Activated CD4-positive, alpha-beta T cell treated with anti-CD3 and anti-CD28 coated beads, Interleukin-2, amount 10 ng/mL, durations not matched to agents 7 days and 5 days (primary cell): ENCODE measurements at regions of chr2 and their contacts with region 1.

Region 1: DNA sequence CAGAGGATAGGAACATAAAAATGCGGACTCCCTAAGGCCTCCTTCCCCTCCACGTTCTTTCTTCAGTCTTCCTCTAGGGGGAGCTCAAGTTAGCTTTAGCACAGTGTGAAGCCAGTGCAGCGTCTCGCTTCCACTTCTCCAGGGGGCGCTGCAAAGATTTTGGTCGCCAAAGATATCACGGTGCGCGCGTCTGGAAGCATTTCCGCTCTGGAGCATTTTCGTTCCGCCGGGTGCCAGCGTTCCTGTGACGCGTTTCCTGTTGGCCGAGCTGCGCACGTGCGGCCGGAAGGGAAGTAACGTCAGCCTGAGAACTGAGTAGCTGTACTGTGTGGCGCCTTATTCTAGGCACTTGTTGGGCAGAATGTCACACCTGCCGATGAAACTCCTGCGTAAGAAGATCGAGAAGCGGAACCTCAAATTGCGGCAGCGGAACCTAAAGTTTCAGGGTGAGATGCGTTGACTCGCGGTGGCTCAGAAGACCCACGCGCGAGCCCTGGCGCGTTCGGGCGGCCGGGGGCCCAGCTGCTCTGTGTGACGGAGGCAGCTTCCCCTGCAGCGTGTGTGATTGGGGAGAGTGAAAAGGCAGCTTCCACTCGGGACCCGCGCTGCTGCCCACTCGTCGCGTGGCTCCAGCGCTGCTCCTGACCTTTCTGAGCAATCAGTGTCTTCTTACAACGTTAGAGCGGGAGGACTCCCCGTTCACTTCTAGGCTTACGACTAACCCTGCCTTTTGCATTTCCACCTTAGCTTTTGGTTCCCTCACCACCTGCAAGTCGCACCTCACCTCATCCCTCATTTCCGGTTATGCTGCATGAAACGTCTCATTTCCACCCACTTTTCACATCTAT is at the start of gene DDX18:
- DNase-seq: peak; percentile 98
- H3K4me3 Mint-ChIP-seq: peak within 1 kb of the TSS; percentile 84
- H3K27ac Mint-ChIP-seq: peak within 1 kb of the TSS; percentile 94
- H3K4me1 Mint-ChIP-seq: peaks cover 41% of the 10 kb centered on the region
- H3K27me3 Mint-ChIP-seq: no peaks in the 10 kb centered on the region
- total RNA-seq, gene DDX18: 80.7 to 93.9 TPM

Region 2: DNA sequence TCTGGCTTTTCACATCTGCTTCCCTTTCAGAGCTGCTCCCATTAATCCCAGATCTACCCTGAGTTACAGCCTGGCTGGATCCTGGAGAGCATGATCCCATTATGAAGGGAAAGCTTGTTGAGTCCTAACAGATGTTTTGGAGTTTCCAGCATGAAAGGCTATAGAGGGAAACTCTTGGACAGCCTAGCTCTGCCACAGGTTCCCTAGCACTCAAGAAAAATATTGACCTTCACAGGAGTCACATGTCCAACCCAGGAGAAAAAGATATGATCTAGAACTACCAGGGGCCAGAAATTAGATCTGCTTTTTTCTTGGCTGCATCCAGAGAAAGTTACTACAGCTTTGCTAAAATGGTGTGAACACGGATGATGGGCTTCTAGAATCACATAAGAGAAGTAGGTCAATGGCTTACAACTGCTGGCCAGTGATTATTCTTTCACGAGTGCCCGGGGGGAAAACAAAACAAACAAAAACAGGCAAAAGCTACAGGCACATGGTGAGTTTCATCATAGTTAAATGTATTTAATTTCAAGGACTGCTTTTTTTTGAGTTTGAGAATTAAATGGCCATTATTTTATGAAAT is 183.3 kb after region 1 on chr2:
- CTCF ChIA-PET with region 1: interaction called, 62 read pairs
- POLR2A ChIA-PET with region 1: no interaction called
- DNase-seq: no peak
- H3K4me3 Mint-ChIP-seq: no peak overlapping the region
- H3K27ac Mint-ChIP-seq: no peak overlapping the region
- H3K4me1 Mint-ChIP-seq: no peaks in the 10 kb centered on the region
- H3K27me3 Mint-ChIP-seq: no peaks in the 10 kb centered on the region

Region 3: DNA sequence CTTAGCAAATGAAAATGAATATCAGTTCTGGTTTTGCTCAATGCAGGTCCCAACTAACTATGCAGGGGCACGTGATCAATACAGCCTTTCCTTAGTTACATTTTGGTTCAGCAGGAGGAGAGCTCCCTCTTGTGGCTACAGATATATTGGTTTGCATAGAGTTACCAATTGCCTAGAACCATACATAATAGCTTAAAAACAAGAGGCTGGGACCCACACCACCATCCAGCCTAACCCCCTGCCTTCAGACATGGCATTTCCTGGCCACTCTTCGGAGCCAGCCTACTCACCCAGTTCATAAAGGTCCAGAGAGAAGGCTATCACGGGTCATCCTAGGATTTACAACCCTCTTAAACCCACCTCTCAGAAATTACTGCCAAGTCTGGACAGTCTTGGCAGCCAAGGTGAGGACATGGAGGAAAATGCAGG is 188.8 kb after region 1 on chr2:
- CTCF ChIA-PET with region 1: interaction called, 62 read pairs
- POLR2A ChIA-PET with region 1: no interaction called
- DNase-seq: peak; percentile 78
- H3K4me3 Mint-ChIP-seq: no peak overlapping the region
- H3K27ac Mint-ChIP-seq: no peak overlapping the region
- H3K4me1 Mint-ChIP-seq: peaks cover 16% of the 10 kb centered on the region
- H3K27me3 Mint-ChIP-seq: no peaks in the 10 kb centered on the region

Region 4: DNA sequence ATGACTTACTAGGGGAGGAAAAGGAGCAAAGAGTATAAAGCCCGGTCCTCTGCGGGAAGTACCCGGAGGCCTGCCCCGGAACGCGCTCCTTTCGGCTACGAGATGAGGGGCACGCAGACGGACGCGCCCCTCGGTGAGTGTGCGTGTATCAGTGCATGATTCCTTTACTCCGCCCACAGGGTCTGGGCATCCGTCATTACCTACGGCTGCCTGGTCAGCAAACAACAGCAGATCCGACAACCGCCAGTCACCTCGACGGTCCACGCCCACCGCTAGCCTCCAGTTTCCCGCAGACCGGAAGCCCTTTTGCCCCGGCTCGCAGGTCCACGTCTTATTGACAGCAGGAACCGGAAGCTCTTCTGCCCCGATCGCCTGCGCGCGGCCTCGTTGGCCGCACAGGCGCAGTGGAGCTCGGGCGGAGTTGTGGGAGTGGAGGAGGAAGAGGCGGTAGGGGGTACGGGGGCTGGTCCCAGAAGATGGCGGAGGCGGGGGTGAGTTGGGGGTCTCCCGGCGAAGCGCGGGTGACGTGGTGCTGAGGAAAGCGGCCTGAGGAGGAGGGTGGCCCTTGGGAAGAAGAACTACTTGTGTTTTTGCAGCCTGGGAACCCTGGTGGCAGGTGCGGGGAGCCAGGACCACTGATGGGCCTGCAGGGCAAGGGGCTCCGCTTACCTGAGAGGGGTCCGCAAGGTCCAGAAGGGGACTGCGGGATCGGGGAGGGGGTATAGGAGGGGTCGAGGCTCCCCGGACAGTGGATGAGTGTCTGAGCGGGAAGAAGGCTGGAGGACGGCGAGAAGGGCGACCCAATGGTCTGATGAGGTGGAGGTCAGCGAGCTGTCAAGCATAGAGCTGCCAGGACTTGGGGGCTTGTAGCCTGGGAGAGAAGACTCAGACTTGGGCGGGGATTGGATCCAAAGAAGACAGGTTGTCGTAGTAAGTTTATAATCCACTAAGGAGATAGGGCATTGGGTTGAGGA is 273.7 kb after region 1 on chr2 and contains the start of gene INSIG2:
- CTCF ChIA-PET with region 1: interaction called, 10 read pairs
- POLR2A ChIA-PET with region 1: no interaction called
- DNase-seq: peak; percentile 93
- H3K4me3 Mint-ChIP-seq: peak within 1 kb of the TSS; percentile 94
- H3K27ac Mint-ChIP-seq: peak within 1 kb of the TSS; percentile 91
- H3K4me1 Mint-ChIP-seq: peaks cover 28% of the 10 kb centered on the region
- H3K27me3 Mint-ChIP-seq: peaks cover 17% of the 10 kb centered on the region
- total RNA-seq, gene INSIG2: 18.4 to 25.4 TPM